CD4-positive, alpha-beta memory T cell (primary cell): ENCODE measurements at regions of chr1 and their contacts with region 1.

Region 1: GRCh38 chr1:193537266-193538002 is 351.0 kb upstream of the B3GALT2 start:
- DNase-seq: peak; percentile 61 to 80 (median 73)
- H3K4me3 ChIP-seq: peak overlapping the region in 1 of 2 donors; percentile 12
- H3K4me3 Mint-ChIP-seq: peak overlapping the region; percentile 79 to 88 (median 84)
- H3K27ac ChIP-seq: peak overlapping the region; percentile 71
- H3K27ac Mint-ChIP-seq: peak overlapping the region; percentile 83 to 95 (median 91)
- H3K4me1 ChIP-seq: peaks cover 58% of the 10 kb centered on the region
- H3K4me1 Mint-ChIP-seq: peaks cover 39 to 58% (median 47%) of the 10 kb centered on the region in 4 donors
- H3K27me3 ChIP-seq: no peaks in the 10 kb centered on the region
- H3K27me3 Mint-ChIP-seq: no peaks in the 10 kb centered on the region

Region 2: GRCh38 chr1:193183019-193183627 is 354.3 kb before region 1 on chr1:
- CTCF ChIA-PET with region 1: no interaction called
- POLR2A ChIA-PET with region 1: interaction called, 7 read pairs
- intact Hi-C with region 1: loop called (anchors 10 kb)
- DNase-seq: peak in 4 of 5 donors; percentile 59 to 64 (median 62)
- H3K4me3 ChIP-seq: peak overlapping the region in 1 of 2 donors; percentile 10
- H3K4me3 Mint-ChIP-seq: peak overlapping the region; percentile 60 to 92 (median 81)
- H3K27ac ChIP-seq: peak overlapping the region; percentile 23
- H3K27ac Mint-ChIP-seq: peak overlapping the region in 4 of 7 donors; percentile 16 to 82 (median 68)
- H3K4me1 ChIP-seq: peaks cover 47% of the 10 kb centered on the region
- H3K4me1 Mint-ChIP-seq: peaks cover 28 to 52% (median 36%) of the 10 kb centered on the region in 4 donors
- H3K27me3 ChIP-seq: no peaks in the 10 kb centered on the region
- H3K27me3 Mint-ChIP-seq: no peaks in the 10 kb centered on the region

Region 3: GRCh38 chr1:193456811-193457280 is 80.6 kb before region 1 on chr1:
- CTCF ChIA-PET with region 1: interaction called, 9 read pairs
- POLR2A ChIA-PET with region 1: interaction called, 60 read pairs
- intact Hi-C with region 1: loop called (anchors 5 kb)
- DNase-seq: peak in 1 of 5 donors; percentile 26
- H3K4me3 ChIP-seq: peak overlapping the region in 1 of 2 donors; percentile 28
- H3K4me3 Mint-ChIP-seq: no peak overlapping the region
- H3K27ac ChIP-seq: peak overlapping the region; percentile 67
- H3K27ac Mint-ChIP-seq: no peak overlapping the region
- H3K4me1 ChIP-seq: peaks cover 77% of the 10 kb centered on the region
- H3K4me1 Mint-ChIP-seq: peaks cover 21 to 33% (median 25%) of the 10 kb centered on the region in 4 donors
- H3K27me3 ChIP-seq: no peaks in the 10 kb centered on the region
- H3K27me3 Mint-ChIP-seq: no peaks in the 10 kb centered on the region

Region 4: GRCh38 chr1:193525917-193526710 is 11.3 kb before region 1 on chr1:
- CTCF ChIA-PET with region 1: interaction called, 5 read pairs
- POLR2A ChIA-PET with region 1: interaction called, 16 read pairs
- intact Hi-C with region 1: no loop called
- DNase-seq: no peak
- H3K4me3 ChIP-seq: no peak overlapping the region
- H3K4me3 Mint-ChIP-seq: peak overlapping the region in 2 of 8 donors; percentile 7 to 24
- H3K27ac ChIP-seq: no peak overlapping the region
- H3K27ac Mint-ChIP-seq: peak overlapping the region in 2 of 7 donors; percentile 20 to 54
- H3K4me1 ChIP-seq: no peaks in the 10 kb centered on the region
- H3K4me1 Mint-ChIP-seq: peaks cover 0 to 8% (median 5%) of the 10 kb centered on the region in 4 donors
- H3K27me3 ChIP-seq: no peaks in the 10 kb centered on the region
- H3K27me3 Mint-ChIP-seq: no peaks in the 10 kb centered on the region

Region 5: GRCh38 chr1:193558491-193559028 is 21.1 kb after region 1 on chr1:
- CTCF ChIA-PET with region 1: interaction called, 4 read pairs
- POLR2A ChIA-PET with region 1: interaction called, 25 read pairs
- intact Hi-C with region 1: loop called (anchors 2 kb)
- DNase-seq: peak in 2 of 5 donors; percentile 17 to 45
- H3K4me3 ChIP-seq: no peak overlapping the region
- H3K4me3 Mint-ChIP-seq: peak overlapping the region in 7 of 8 donors; percentile 7 to 65 (median 39)
- H3K27ac ChIP-seq: no peak overlapping the region
- H3K27ac Mint-ChIP-seq: peak overlapping the region; percentile 48 to 96 (median 81)
- H3K4me1 ChIP-seq: peaks cover 12% of the 10 kb centered on the region
- H3K4me1 Mint-ChIP-seq: peaks cover 11 to 31% (median 18%) of the 10 kb centered on the region in 4 donors
- H3K27me3 ChIP-seq: no peaks in the 10 kb centered on the region
- H3K27me3 Mint-ChIP-seq: no peaks in the 10 kb centered on the region

Region 6: DNA sequence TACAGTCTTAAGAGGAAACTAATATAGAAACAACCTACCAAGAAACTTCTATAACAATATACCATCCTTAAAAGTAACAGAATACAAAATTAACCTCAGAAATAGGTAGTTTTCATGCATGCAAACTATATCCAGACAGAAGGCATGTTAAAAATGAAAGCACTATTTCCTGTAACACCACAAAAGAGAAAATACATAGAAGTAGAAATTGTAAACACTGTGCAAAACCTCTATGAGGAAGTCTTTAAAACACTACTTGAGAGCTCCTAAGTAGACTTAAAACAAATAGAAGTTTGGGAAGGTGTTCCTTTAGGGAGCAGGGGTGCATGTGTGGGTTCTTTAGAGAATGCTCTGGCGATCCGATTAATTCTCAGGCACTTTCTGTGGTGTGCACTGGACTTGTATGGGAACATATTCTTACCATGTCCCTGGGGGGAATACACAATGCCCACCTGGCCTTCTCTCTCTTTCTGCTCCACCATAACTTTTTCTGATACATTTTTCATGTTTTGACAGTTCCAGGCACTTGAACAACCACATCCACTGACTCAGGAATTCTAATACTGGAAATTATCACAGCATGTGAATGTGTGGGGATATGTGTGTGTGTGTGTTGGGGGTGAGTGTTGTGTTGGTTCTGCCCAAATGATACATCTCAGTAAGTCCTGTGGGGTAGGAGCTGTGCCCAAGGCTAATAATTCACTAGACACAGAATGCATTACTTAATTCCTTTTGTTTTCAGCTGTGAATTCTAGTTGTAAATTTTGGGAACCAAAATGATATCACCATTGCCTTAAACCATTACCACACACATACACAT is 515.3 kb after region 1 on chr1:
- CTCF ChIA-PET with region 1: no interaction called
- POLR2A ChIA-PET with region 1: no interaction called
- intact Hi-C with region 1: loop called (anchors 5 kb)
- DNase-seq: peak in 3 of 5 donors; percentile 13 to 34 (median 24)
- H3K4me3 ChIP-seq: no peak overlapping the region
- H3K4me3 Mint-ChIP-seq: peak overlapping the region; percentile 10 to 79 (median 65)
- H3K27ac ChIP-seq: peak overlapping the region; percentile 20
- H3K27ac Mint-ChIP-seq: peak overlapping the region; percentile 50 to 93 (median 90)
- H3K4me1 ChIP-seq: peaks cover 62% of the 10 kb centered on the region
- H3K4me1 Mint-ChIP-seq: peaks cover 55 to 59% (median 58%) of the 10 kb centered on the region in 4 donors
- H3K27me3 ChIP-seq: no peaks in the 10 kb centered on the region
- H3K27me3 Mint-ChIP-seq: no peaks in the 10 kb centered on the region